ENCODE measurements at regions of chr19 and their contacts with region 1.

Region 1: DNA sequence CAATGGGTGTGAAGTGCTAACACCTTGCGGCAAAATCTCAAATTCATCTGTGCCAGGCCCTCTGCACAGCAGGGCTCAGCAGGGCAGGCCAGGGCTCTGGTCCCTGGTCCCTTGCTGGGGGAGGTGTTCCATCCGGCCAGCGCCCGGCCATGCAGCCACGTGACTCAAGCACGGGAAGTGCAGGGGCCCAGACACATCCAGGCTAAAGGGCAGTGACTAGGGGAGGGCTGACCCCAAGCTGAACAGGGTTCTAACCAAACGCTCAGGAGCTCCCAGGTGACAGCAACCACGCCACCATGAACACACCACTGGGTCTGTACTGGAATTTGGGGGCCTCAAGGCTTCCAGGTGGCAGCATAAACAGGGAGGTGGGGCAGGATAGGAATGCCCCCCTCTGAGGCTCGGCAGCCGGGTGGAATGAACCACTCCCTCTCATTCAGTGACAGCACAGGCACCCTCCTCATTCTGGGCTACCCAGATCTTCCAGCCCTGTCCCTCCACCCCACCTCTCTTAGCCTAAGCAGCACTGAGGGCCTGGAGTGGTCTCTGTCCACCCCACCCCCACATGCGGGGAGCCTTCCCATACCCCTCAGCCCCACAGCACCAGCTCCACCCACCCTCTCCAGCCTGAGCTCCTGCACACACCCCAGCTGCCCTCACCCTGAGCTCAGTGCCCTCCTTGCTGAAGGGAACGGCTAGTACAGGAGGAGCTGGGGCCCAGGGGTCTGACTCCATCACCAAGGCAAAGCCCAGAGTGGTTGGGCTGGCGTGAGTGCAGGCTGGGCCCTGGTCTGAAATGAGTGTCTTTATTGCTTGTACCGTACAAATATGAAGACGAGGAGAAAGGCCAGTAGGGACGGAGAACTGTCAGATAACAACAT is 5.3 kb upstream of the CCNP start:
- DNase-seq: no peak
- H3K4me3 ChIP-seq: no peak overlapping the region
- H3K27ac ChIP-seq: peak overlapping the region; percentile 52; the same call in 1 of the 2 replicates
- H3K4me1 ChIP-seq: peaks cover 0 to 20% (median 13%) of the 10 kb centered on the region in 4 experiments; a peak in 6 of 7 replicates
- H3K27me3 ChIP-seq: peaks cover 0 to 13% (median 4%) of the 10 kb centered on the region in 4 experiments; a peak in 4 of 7 replicates
- CTCF ChIP-seq: no peak
- EP300 ChIP-seq: no peak
- POLR2A ChIP-seq: peak in 1 of 2 experiments; percentile 44; a peak in 1 of 3 replicates
- RAD21 ChIP-seq: no peak

Region 2: DNA sequence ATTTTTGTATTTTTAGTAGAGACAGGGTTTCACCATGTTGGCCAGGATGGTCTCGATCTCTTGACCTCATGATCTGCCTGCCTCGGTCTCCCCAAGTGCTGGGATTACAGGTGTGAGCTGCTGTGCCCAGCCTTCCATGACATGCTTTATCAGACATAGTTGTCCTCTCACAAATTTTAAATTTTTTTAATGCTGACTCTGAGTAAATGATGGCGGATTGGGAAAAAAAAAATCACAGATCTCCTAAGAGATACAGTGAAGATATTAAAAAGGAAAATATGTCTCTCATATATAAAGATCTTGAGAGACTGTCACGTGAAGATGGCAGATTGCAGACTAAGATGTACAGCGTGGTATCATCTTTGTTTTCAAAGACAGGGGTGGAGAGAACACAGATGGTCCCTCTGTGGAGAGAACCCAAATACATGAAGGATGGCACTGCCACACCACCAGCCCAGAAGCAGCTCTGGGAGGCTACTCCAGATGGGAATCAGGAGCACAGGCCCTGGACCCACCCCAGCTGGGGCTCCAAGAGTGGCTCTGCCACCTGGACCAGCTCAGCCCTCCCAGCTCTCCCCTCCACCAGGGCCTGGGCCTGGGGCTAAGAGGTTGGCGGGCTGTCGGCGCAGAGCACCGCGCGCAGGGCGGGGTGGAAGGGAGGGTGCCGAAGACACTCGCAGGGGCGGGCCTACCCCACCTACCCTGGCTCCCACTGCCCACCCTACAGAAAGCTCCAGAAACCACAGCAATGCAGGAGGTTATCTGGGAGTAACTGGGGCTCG is 14.7 kb after region 1 on chr19:
- CTCF ChIA-PET with region 1: interaction called, 11 read pairs
- POLR2A ChIA-PET with region 1: interaction called, 4 read pairs
- DNase-seq: no peak
- H3K4me3 ChIP-seq: no peak overlapping the region
- H3K27ac ChIP-seq: no peak overlapping the region
- H3K4me1 ChIP-seq: no peaks in the 10 kb centered on the region; a peak in 1 of 7 replicates
- H3K27me3 ChIP-seq: no peaks in the 10 kb centered on the region
- CTCF ChIP-seq: no peak
- EP300 ChIP-seq: no peak
- POLR2A ChIP-seq: no peak
- RAD21 ChIP-seq: no peak

Region 3: GRCh38 chr19:40279120-40279551 is 47.4 kb after region 1 on chr19:
- CTCF ChIA-PET with region 1: interaction called, 12 read pairs
- POLR2A ChIA-PET with region 1: interaction called, 3 read pairs
- DNase-seq: no peak
- H3K4me3 ChIP-seq: no peak overlapping the region
- H3K27ac ChIP-seq: no peak overlapping the region
- H3K4me1 ChIP-seq: peaks cover 0 to 28% (median 18%) of the 10 kb centered on the region in 4 experiments; a peak in 6 of 7 replicates
- H3K27me3 ChIP-seq: no peaks in the 10 kb centered on the region
- CTCF ChIP-seq: no peak
- EP300 ChIP-seq: no peak
- POLR2A ChIP-seq: no peak
- RAD21 ChIP-seq: no peak

Region 4: DNA sequence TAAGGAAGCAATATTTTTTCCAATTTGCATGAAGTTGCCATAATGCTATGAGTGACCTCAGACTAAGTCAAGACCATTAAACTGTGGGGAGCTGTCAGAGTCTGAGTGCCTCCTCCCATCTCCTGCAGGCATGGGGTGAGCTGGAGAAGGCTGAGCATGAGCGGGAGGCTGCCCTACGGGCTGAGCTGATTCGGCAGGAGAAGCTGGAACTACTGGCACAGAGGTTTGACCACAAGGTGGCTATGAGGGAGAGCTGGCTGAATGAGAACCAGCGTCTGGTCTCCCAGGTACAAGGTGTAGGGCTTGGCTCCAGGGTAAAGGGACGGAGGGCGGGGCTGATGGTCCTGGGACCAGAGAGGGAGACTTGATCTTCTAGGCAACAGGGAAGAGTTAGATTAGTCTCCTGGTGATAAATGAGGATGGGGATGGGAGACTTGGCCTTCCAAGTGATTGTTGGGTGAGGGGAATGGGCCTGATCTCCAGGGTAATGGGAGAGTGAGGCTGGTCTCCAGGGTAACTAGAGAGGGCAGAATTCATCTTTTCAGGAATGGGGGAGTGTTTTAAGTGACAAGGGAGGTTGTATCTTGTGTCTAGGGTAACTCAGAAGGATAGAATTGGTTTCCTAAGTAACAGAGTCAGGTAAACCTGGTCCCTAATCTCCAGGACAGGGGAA is 271.0 kb after region 1 on chr19:
- CTCF ChIA-PET with region 1: no interaction called
- POLR2A ChIA-PET with region 1: no interaction called
- DNase-seq: peak in 1 of 2 experiments; percentile 17
- H3K4me3 ChIP-seq: no peak overlapping the region
- H3K27ac ChIP-seq: no peak overlapping the region
- H3K4me1 ChIP-seq: no peaks in the 10 kb centered on the region
- H3K27me3 ChIP-seq: peaks cover 0 to 6% (median 3%) of the 10 kb centered on the region in 4 experiments; a peak in 3 of 7 replicates
- CTCF ChIP-seq: peak; percentile 40 to 58 (median 40)
- EP300 ChIP-seq: no peak
- POLR2A ChIP-seq: no peak
- RAD21 ChIP-seq: peak; percentile 7 to 41; a peak in 3 of 4 replicates